Panc1 (cell line): ENCODE measurements at regions of chr11 and their contacts with region 1.

Region 1: DNA sequence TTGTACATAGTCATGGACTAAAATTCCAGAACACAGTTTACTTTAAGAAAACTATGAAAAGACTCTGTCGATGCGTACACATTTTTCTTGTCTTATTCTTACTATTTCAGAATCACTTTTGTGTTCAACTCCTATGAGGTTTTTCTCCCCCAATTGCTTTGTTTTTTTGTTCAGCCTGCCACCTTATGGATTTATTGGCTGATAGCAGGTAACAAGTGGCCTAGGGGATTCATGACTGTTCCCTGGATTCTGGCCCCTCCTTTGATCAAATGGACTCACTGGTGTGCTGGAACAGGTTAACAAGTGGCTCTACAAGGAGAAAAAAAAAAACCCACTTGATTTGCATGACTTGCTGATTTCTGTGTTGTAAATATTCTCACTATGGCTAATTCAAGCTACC is 10.6 kb downstream of the MMP20 start:
- DNase-seq: no peak
- ATAC-seq: no peak
- H3K4me3 ChIP-seq: no peak overlapping the region
- H3K27ac ChIP-seq: peak overlapping the region; percentile 80; the same call in 1 of the 2 replicates
- H3K4me1 ChIP-seq: peaks cover 27% of the 10 kb centered on the region
- H3K27me3 ChIP-seq: no peaks in the 10 kb centered on the region
- CTCF ChIP-seq: peak; percentile 64

Region 2: GRCh38 chr11:102287964-102288724 is 326.3 kb before region 1 on chr11:
- CTCF ChIA-PET with region 1: interaction called, 6 read pairs
- POLR2A ChIA-PET with region 1: no interaction called
- in situ Hi-C with region 1: no loop called
- intact Hi-C with region 1: loop called (anchors 5 kb)
- DNase-seq: peak; percentile 81
- ATAC-seq: peak; percentile 91
- H3K4me3 ChIP-seq: peak overlapping the region; percentile 18 to 47
- H3K27ac ChIP-seq: peak overlapping the region; percentile 95
- H3K4me1 ChIP-seq: peaks cover 46% of the 10 kb centered on the region
- H3K27me3 ChIP-seq: no peaks in the 10 kb centered on the region
- CTCF ChIP-seq: peak; percentile 86

Region 3: DNA sequence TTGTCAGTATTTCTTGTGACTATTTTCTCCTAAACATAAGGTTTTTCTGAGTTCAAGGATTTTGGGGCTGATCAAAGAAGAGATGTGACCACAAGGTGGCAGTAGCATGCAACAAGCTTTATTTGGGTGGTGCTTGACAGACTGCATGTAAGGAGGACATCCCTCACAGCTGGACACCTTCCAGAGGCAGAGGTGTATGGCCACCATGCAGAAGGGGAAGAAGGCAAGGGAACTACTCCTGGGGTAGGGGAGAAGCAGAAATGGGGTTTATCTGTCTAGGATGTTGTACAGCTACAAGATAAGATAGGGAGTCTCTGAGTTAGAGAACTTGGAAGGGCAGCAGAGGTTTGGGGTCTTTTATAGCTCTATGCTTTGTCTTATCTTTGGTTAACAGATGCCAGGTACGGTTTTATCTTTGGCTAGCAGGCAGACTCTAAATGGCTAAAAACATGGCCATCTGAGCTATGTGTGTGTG is 272.6 kb before region 1 on chr11:
- CTCF ChIA-PET with region 1: interaction called, 26 read pairs
- POLR2A ChIA-PET with region 1: no interaction called
- in situ Hi-C with region 1: no loop called
- intact Hi-C with region 1: loop called (anchors 2 kb)
- DNase-seq: no peak
- ATAC-seq: peak; percentile 70
- H3K4me3 ChIP-seq: no peak overlapping the region
- H3K27ac ChIP-seq: peak overlapping the region; percentile 75
- H3K4me1 ChIP-seq: peaks cover 38% of the 10 kb centered on the region
- H3K27me3 ChIP-seq: no peaks in the 10 kb centered on the region
- CTCF ChIP-seq: peak; percentile 91

Region 4: GRCh38 chr11:102410382-102410784 is 204.1 kb before region 1 on chr11:
- CTCF ChIA-PET with region 1: interaction called, 6 read pairs
- POLR2A ChIA-PET with region 1: no interaction called
- in situ Hi-C with region 1: no loop called
- intact Hi-C with region 1: loop called (anchors 5 kb)
- DNase-seq: no peak
- ATAC-seq: peak; percentile 58
- H3K4me3 ChIP-seq: no peak overlapping the region
- H3K27ac ChIP-seq: peak overlapping the region; percentile 65
- H3K4me1 ChIP-seq: peaks cover 56% of the 10 kb centered on the region
- H3K27me3 ChIP-seq: no peaks in the 10 kb centered on the region
- CTCF ChIP-seq: no peak

Region 5: DNA sequence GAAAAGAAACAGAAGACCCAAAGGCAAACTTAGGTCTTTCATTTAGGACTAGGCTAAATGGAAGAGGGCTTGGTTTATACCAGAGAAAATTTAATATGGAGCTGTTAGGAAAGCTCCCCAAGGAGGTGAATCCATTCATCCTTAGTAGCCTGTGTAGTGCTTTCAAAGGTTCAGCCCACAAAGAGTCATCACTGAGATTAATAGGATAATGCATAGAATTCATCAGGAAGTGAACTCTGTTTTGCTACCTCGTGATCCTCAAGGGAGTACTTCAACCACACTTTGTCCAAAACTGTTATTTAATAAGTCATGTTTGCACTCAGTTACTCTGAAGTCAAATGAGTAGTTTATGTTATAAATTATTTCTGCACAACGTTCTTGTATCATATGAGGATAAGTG is 40.6 kb before region 1 on chr11:
- CTCF ChIA-PET with region 1: no interaction called
- POLR2A ChIA-PET with region 1: no interaction called
- in situ Hi-C with region 1: no loop called
- intact Hi-C with region 1: no loop called
- DNase-seq: no peak
- ATAC-seq: peak; percentile 51; the same call in 1 of the 2 replicates
- H3K4me3 ChIP-seq: no peak overlapping the region
- H3K27ac ChIP-seq: peak overlapping the region; percentile 55; the same call in 1 of the 2 replicates
- H3K4me1 ChIP-seq: no peaks in the 10 kb centered on the region
- H3K27me3 ChIP-seq: no peaks in the 10 kb centered on the region
- CTCF ChIP-seq: no peak